ENCODE measurements at regions of chr20 and their contacts with region 1.

Region 1: DNA sequence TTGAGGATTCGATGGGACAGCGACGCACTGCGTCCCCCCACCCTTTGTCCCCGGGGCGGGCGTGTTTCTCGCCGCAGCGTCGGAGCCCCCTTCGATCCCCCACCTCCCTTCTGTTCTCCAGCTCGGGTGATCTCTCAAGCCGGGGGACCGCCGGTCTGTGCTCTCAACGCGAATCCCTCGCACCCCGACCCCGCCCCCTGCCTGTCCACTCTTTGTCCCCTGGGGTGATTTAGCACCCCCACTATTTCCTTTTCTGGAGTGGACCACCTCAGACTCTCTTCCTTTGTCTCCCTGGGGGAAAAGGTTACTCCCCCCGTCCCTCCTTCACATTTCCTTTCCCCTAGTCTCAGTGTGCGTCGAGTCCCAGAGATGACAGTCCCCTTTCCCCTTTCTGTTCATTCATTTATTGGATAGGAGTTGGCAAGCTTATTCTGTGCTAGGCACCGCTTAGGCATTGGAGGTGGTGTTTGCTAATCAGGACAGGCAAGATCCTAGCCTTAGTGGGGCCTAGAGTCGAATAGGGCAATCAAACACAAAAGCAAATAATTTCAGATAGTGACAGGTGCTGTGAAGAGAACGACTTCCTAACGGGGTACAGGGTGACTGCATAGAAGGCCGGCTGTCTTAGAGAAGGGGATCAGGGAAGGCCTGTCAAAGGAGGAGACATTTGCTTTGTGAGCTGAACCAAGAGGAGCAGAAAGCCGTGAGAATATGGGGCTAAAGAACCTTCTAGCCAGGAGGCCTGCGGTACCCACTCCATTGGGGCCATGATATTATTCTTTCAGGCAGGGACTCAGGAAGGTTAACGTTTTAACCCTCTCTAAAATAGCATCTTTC is 741 bp downstream of the PTPN1 start:
- DNase-seq: no peak
- H3K4me3 ChIP-seq: peak overlapping the region; percentile 93
- H3K27ac ChIP-seq: peak overlapping the region; percentile 62
- H3K27me3 ChIP-seq: no peaks in the 10 kb centered on the region
- CTCF ChIP-seq: no peak

Region 2: GRCh38 chr20:50575847-50576720 is 65.2 kb after region 1 on chr20:
- CTCF ChIA-PET with region 1: interaction called, 11 read pairs
- POLR2A ChIA-PET with region 1: no interaction called
- DNase-seq: no peak
- H3K4me3 ChIP-seq: no peak overlapping the region
- H3K27ac ChIP-seq: peak overlapping the region; percentile 31
- H3K27me3 ChIP-seq: no peaks in the 10 kb centered on the region
- CTCF ChIP-seq: peak; percentile 81

Measured in AG04450 (cell line).